ENCODE measurements at regions of chr2 and their contacts with region 1.

Region 1: DNA sequence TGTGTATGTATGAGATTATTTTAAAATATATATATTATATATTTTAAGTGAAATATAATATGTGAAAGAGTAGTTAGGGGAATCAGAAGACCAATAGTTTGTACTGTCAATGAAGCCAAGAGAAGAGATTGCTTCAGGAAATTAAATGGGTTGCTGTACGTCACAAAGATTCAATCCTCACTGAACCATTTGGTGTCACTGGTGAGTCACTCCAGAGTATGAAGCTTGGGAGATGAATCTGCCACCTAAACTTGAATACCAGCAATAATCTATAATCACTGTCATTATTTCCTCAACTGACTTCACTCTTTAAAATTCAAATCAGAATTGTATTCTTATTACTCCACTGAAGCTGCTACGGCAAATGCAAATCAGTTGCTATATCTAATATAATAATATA is 41.9 kb upstream of the SCN9A start:
- DNase-seq: no peak
- ATAC-seq: peak in 3 of 4 donors; percentile 65 to 86 (median 80)
- H3K4me3 ChIP-seq: no peak overlapping the region
- H3K27ac ChIP-seq: no peak overlapping the region
- H3K4me1 ChIP-seq: no peaks in the 10 kb centered on the region
- H3K27me3 ChIP-seq: no peaks in the 10 kb centered on the region
- CTCF ChIP-seq: no peak

Region 2: DNA sequence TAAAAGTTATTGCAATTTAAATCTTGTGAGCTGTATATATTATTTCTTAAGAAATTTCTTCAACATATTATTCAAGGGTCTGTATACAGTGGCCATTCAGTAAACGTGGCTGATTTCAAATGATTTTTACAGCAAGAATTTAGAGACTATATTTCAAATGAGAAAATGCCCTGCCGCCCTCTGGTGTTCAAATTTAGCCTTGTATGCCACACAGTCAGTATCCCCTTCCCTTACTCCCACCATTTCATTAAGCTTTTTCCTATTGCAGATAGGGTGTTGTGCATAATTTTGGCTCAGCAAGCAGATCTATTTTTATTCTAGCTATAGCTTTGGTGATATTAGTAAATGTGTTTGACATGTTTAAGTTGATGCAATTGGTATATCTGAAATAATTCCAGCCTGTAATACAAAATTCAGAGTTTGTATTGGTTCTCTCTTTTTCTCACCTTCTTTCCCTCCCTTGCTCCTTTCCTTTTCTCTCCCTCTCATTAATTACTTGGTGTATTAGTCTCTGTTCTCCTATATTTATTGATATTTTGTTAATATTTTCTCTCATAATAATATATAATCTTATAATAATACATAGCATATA is 99.1 kb after region 1 on chr2:
- intact Hi-C with region 1: loop called in 1 of 3 experiments (anchors 10 kb)
- DNase-seq: peak in 1 of 6 donors; percentile 31
- ATAC-seq: peak in 3 of 4 donors; percentile 57 to 74 (median 66)
- H3K4me3 ChIP-seq: no peak overlapping the region
- H3K27ac ChIP-seq: no peak overlapping the region
- H3K4me1 ChIP-seq: no peaks in the 10 kb centered on the region
- H3K27me3 ChIP-seq: no peaks in the 10 kb centered on the region
- CTCF ChIP-seq: peak in 3 of 4 donors; percentile 28 to 51 (median 44)